K562 (cell line): ENCODE measurements at regions of chr9 and their contacts with region 1.

Region 1: GRCh38 chr9:111483862-111484571 is at the start of gene ECPAS:
- DNase-seq: peak; percentile 77 to 87 (median 84)
- ATAC-seq: peak; percentile 78
- H3K4me3 ChIP-seq: peak within 1 kb of the TSS; percentile 94
- H3K27ac ChIP-seq: peak within 1 kb of the TSS; percentile 97
- H3K4me1 ChIP-seq: peaks cover 8 to 18% of the 10 kb centered on the region in 2 experiments; a peak in 3 of 5 replicates
- H3K27me3 ChIP-seq: no peaks in the 10 kb centered on the region
- CTCF ChIP-seq: no peak
- EP300 ChIP-seq: no peak
- POLR2A ChIP-seq: peak; percentile 79
- RAD21 ChIP-seq: no peak; a peak in 1 of 4 replicates
- polyA plus RNA-seq, gene ECPAS: 14.5 to 29.5 TPM

Region 2: GRCh38 chr9:111525056-111525977 is 41.3 kb after region 1 on chr9 and contains the start of gene ZNF483:
- CTCF ChIA-PET with region 1: no interaction called
- POLR2A ChIA-PET with region 1: no interaction called
- in situ Hi-C with region 1: no loop called
- intact Hi-C with region 1: loop called (anchors 5 kb)
- DNase-seq: peak; percentile 66 to 79 (median 72)
- ATAC-seq: peak; percentile 93
- H3K4me3 ChIP-seq: peak within 1 kb of the TSS; percentile 50
- H3K27ac ChIP-seq: no peak within 1 kb of the TSS
- H3K4me1 ChIP-seq: peaks cover 12 to 13% of the 10 kb centered on the region in 2 experiments
- H3K27me3 ChIP-seq: peaks cover 25 to 39% of the 10 kb centered on the region in 2 experiments; a peak in 4 of 5 replicates
- CTCF ChIP-seq: no peak
- EP300 ChIP-seq: no peak
- POLR2A ChIP-seq: no peak
- RAD21 ChIP-seq: no peak
- polyA plus RNA-seq, gene ZNF483: 0.25 to 0.38 TPM

Region 3: GRCh38 chr9:111631071-111631971 is 147.3 kb after region 1 on chr9 and contains the start of gene DNAJC25:
- CTCF ChIA-PET with region 1: no interaction called
- POLR2A ChIA-PET with region 1: interaction called, 3 read pairs
- in situ Hi-C with region 1: no loop called
- intact Hi-C with region 1: loop called (anchors 10 kb)
- DNase-seq: peak; percentile 98 to 99 (median 98)
- ATAC-seq: peak; percentile 97
- H3K4me3 ChIP-seq: peak within 1 kb of the TSS; percentile 97
- H3K27ac ChIP-seq: peak within 1 kb of the TSS; percentile 81
- H3K4me1 ChIP-seq: peaks cover 6 to 21% of the 10 kb centered on the region in 2 experiments
- H3K27me3 ChIP-seq: no peaks in the 10 kb centered on the region
- CTCF ChIP-seq: no peak
- EP300 ChIP-seq: peak; percentile 41; the same call in 1 of the 2 replicates
- POLR2A ChIP-seq: peak; percentile 94
- RAD21 ChIP-seq: no peak
- polyA plus RNA-seq, gene DNAJC25: 3.7 to 4.4 TPM